ENCODE measurements at regions of chr6 and their contacts with region 1.

Region 1: DNA sequence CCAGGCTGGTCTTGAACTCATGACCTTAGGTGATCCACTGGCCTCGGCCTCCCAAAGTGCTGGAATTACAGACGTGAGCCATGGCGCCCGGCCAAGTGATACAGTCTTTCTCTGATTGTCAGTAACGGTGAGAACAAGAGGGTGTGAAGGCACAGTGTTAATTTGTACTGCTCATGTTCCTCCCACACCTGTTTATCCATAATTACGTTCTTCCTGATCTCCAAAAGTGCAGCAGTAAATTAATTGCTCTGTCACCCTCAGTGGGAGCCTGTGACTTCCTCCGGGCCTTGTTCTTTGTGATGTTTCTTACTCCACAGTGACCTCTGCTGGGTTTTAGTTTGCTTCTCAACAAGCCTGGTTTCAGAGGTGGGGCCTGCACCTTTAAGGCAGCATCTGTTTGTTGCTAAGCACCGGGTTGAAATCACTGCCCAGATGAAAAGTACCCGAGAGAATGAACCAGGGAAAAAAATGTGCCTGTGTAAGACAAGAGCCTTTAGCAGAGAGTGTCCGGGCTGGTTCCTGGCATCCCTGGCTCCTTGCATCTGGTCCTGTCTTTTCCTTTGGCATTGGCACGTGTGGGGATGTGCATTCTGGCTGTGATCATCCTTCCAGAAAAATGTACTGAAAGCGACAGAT is 89.1 kb upstream of the CLDN20 start:
- DNase-seq: peak; percentile 89
- H3K4me3 Mint-ChIP-seq: no peak overlapping the region
- H3K27ac Mint-ChIP-seq: no peak overlapping the region
- H3K4me1 Mint-ChIP-seq: peaks cover 26% of the 10 kb centered on the region
- H3K27me3 Mint-ChIP-seq: no peaks in the 10 kb centered on the region
- CTCF ChIP-seq: peak; percentile 65

Region 2: GRCh38 chr6:154675602-154676088 is 499.0 kb before region 1 on chr6:
- CTCF ChIA-PET with region 1: interaction called, 5 read pairs
- POLR2A ChIA-PET with region 1: no interaction called
- intact Hi-C with region 1: loop called (anchors 1 kb)
- DNase-seq: peak; percentile 93
- H3K4me3 Mint-ChIP-seq: no peak overlapping the region
- H3K27ac Mint-ChIP-seq: no peak overlapping the region
- H3K4me1 Mint-ChIP-seq: no peaks in the 10 kb centered on the region
- H3K27me3 Mint-ChIP-seq: no peaks in the 10 kb centered on the region
- CTCF ChIP-seq: peak; percentile 98

Region 3: DNA sequence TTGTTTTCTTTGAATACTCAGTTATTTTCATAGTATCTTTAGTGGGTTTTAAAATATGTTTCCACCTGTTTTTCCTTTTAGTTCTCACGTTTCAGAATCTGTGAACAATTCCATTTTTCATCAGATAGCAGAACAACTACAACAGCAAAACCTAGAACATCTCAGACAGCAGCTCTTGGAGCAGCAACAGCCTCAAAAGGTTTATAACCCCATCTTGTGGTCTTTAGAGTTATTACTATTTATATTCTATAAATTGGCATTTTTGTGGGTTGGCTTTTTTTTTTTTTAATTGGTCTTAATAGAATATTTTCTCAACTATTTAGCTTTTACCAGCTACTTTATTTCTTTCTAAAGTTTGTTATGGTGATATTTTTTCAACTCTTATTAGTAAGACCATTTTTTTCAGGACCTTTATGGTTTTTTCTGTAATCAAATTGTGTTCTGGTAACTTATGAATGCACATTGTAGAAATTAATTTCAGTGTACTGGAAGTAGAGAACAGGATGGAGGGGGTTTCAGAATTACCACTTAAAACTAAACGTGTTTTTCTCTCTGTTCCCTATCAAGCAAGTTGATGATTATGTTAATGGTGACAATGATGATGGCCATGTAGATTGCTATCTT is 369.3 kb before region 1 on chr6:
- CTCF ChIA-PET with region 1: interaction called, 3 read pairs
- POLR2A ChIA-PET with region 1: no interaction called
- intact Hi-C with region 1: loop called (anchors 1 kb)
- DNase-seq: peak; percentile 47
- H3K4me3 Mint-ChIP-seq: no peak overlapping the region
- H3K27ac Mint-ChIP-seq: no peak overlapping the region
- H3K4me1 Mint-ChIP-seq: peaks cover under 1% of the 10 kb centered on the region
- H3K27me3 Mint-ChIP-seq: no peaks in the 10 kb centered on the region
- CTCF ChIP-seq: peak; percentile 49

Region 4: GRCh38 chr6:154928325-154928922 is 246.3 kb before region 1 on chr6:
- CTCF ChIA-PET with region 1: interaction called, 93 read pairs
- POLR2A ChIA-PET with region 1: interaction called, 40 read pairs
- intact Hi-C with region 1: loop called (anchors 1 kb)
- DNase-seq: peak; percentile 77
- H3K4me3 Mint-ChIP-seq: no peak overlapping the region
- H3K27ac Mint-ChIP-seq: no peak overlapping the region
- H3K4me1 Mint-ChIP-seq: peaks cover 24% of the 10 kb centered on the region
- H3K27me3 Mint-ChIP-seq: no peaks in the 10 kb centered on the region
- CTCF ChIP-seq: peak; percentile 84

Region 5: GRCh38 chr6:155188707-155189496 is 14.2 kb after region 1 on chr6:
- CTCF ChIA-PET with region 1: interaction called, 10 read pairs
- POLR2A ChIA-PET with region 1: no interaction called
- intact Hi-C with region 1: no loop called
- DNase-seq: peak; percentile 85
- H3K4me3 Mint-ChIP-seq: peak overlapping the region; percentile 37
- H3K27ac Mint-ChIP-seq: peak overlapping the region; percentile 81
- H3K4me1 Mint-ChIP-seq: peaks cover 23% of the 10 kb centered on the region
- H3K27me3 Mint-ChIP-seq: no peaks in the 10 kb centered on the region
- CTCF ChIP-seq: no peak

Region 6: DNA sequence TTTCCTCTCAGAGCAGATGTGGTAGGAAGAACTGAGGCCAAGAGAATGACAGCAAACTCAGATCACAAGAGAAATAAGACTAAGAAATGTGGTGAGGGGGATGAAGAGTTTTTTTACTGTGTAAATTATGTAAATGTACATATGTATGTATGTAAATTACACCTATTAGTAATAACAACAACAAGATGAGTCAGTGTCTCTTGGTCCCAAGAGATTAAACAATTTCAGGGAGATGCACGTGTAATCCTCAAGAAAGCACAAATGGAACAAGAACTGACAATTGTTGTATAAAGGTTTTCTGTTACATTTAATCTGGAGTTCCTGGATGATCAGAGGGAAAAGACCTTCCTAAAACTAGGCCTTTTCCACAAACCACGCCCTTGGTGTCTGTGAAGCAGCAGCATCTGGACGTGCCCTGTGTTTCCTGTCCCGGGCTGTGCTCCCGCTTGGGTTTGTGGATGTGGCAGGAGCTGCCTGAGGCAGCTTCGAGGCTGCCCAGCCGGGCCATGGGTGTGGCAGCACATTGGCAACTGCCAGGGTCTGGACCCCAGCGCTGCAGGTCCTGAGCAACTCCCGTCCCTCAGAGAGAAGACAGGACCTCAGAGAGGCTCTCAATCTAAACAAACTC is 90.1 kb after region 1 on chr6:
- CTCF ChIA-PET with region 1: interaction called, 7 read pairs
- POLR2A ChIA-PET with region 1: interaction called, 3 read pairs
- intact Hi-C with region 1: loop called (anchors 1 kb)
- DNase-seq: peak; percentile 52
- H3K4me3 Mint-ChIP-seq: no peak overlapping the region
- H3K27ac Mint-ChIP-seq: peak overlapping the region; percentile 75
- H3K4me1 Mint-ChIP-seq: peaks cover 12% of the 10 kb centered on the region
- H3K27me3 Mint-ChIP-seq: no peaks in the 10 kb centered on the region
- CTCF ChIP-seq: no peak